T-cell (primary cell): ENCODE measurements at regions of chr16 and their contacts with region 1.

Region 1: DNA sequence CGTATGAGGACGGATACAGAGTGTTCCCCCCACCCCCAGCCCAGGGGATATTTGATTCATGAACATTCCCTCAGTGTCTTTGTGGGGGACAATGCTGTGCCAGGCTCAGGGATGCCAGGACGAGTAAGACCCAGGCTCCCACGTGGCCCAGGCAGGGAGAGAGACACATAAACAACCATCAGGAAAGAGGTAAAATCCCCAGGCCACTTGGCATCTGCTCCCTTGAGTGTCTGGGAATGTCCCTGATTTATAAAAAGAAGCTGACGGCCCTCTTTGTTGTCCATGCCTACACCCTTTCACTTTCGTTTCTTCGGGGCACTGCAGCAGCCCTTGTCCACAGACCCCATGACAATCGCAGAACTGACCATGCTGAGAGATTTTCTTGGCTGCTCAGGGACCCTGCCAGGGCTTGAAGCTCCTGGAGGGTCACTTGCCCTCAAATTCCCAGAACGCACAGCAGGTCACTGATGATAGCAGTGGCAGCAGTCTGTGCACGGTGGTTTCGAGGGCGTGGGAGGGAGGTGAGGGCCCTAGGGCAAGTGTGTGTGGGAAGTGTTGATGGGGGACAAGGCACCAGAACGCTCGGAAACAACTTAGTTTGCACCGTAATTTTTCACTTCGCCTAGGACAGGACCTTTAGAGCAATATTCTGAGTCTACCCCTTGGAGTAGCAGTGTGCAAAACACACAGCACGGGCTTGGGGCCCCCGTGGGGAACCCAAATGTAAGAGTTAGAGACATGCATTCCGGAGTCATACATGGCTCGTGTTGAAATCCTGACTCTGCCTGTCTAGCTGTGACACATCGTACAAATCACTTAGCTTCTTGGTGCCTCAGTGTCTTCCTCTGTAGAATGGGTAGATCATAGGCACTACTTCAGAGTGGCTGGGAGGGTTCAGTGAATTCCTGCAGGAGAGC is 4.7 kb downstream of the NOD2 start:
- DNase-seq: peak in 5 of 35 experiments; percentile 11 to 72 (median 19)
- ATAC-seq: peak; percentile 46 to 60 (median 46)
- H3K4me3 ChIP-seq: peak overlapping the region in 1 of 2 donors; percentile 44
- H3K4me3 Mint-ChIP-seq: peak overlapping the region; percentile 77 to 84 (median 84)
- H3K27ac ChIP-seq: peak overlapping the region; percentile 94
- H3K27ac Mint-ChIP-seq: peak overlapping the region; percentile 95
- H3K4me1 ChIP-seq: peaks cover 7 to 73% of the 10 kb centered on the region in 2 experiments
- H3K4me1 Mint-ChIP-seq: peaks cover 56 to 89% (median 75%) of the 10 kb centered on the region in 3 donors
- H3K27me3 ChIP-seq: peaks cover 0 to 7% of the 10 kb centered on the region in 2 experiments
- H3K27me3 Mint-ChIP-seq: no peaks in the 10 kb centered on the region

Region 2: DNA sequence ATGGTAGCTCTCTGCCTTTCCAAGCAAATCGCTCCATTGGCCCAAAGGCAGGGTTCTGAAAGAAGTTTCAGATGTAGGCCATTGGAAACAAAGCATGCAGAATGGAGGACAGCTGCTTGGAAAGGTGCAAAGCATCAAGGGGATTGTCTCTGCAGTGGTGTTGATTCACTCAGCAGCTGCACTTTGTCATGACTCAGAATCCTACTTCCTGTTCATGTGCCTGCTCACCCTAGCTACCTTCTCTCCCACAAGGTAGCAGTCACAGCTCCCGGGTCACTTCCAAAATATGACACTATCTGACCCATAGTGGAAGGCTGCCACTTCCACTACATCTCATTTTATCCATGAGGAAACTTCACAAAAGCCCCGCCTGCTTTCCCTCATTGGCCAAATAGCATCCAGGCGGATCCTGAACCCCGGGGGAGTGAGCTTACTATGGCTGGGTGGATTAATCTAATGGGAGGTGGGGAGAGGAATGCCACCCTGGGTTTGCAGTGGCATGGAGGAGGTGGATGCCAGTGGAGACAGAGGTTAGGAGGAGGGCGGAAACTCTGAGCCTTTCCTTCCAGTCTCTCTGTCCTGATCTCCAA is 224.7 kb before region 1 on chr16:
- CTCF ChIA-PET with region 1: no interaction called
- POLR2A ChIA-PET with region 1: no interaction called
- DNase-seq: no peak
- ATAC-seq: peak in 3 of 4 experiments; percentile 58 to 80 (median 78)
- H3K4me3 ChIP-seq: no peak overlapping the region
- H3K4me3 Mint-ChIP-seq: no peak overlapping the region
- H3K27ac ChIP-seq: no peak overlapping the region
- H3K27ac Mint-ChIP-seq: no peak overlapping the region
- H3K4me1 ChIP-seq: peaks cover 0 to under 1% of the 10 kb centered on the region in 2 experiments
- H3K4me1 Mint-ChIP-seq: peaks cover 6 to 15% (median 14%) of the 10 kb centered on the region in 3 donors
- H3K27me3 ChIP-seq: peaks cover 0 to 27% of the 10 kb centered on the region in 2 experiments
- H3K27me3 Mint-ChIP-seq: peaks cover 0 to 17% of the 10 kb centered on the region in 2 donors

Region 3: DNA sequence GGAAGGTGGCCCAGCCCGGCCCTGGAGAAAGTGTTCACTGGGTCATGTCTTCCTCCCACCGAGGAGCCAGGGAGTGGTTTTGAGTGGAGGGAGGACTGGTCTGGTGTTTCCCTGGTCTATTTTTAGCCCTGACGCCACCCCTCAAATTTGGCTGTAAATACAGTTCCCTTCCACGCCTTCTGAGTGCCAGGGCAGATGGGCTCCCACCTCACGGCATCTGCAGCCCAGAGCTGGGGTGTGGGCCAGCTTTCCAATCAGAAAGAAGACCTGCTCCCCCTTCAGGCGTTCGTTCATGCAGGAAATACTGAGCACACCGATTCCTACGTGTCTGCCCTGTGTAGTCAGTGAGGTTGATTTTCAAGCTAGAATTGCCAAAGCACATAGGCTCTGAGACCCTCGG is 70.7 kb before region 1 on chr16:
- CTCF ChIA-PET with region 1: no interaction called
- POLR2A ChIA-PET with region 1: no interaction called
- DNase-seq: peak in 31 of 35 experiments; percentile 14 to 68 (median 42)
- ATAC-seq: peak; percentile 63 to 88 (median 76)
- H3K4me3 ChIP-seq: peak overlapping the region; percentile 19 to 20
- H3K4me3 Mint-ChIP-seq: peak overlapping the region; percentile 53 to 76 (median 64)
- H3K27ac ChIP-seq: peak overlapping the region; percentile 32
- H3K27ac Mint-ChIP-seq: peak overlapping the region; percentile 84 to 87
- H3K4me1 ChIP-seq: peaks cover 22 to 42% of the 10 kb centered on the region in 2 experiments
- H3K4me1 Mint-ChIP-seq: peaks cover 46 to 51% (median 47%) of the 10 kb centered on the region in 3 donors
- H3K27me3 ChIP-seq: no peaks in the 10 kb centered on the region
- H3K27me3 Mint-ChIP-seq: no peaks in the 10 kb centered on the region

Region 4: DNA sequence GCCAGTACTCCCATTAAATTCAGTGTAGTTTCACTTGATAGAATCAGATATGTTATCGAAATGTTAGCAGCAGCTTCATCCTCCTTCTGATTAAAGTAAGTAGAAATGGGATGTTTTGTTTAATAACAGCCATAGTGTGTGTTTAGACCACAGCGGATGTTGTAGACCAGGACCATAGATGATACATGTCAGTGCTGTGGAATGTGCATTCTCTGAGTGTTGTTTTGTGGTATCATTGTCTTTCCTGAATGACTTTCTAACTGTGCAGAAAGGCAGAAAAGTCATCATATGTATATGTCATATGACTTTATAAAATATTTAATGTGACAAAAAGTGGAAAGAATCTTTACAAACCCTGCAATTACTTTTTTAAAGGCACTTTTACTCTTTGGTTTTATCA is 99.3 kb after region 1 on chr16:
- CTCF ChIA-PET with region 1: no interaction called
- POLR2A ChIA-PET with region 1: interaction called in 1 of 2 experiments, 11 read pairs
- DNase-seq: no peak
- ATAC-seq: no peak
- H3K4me3 ChIP-seq: no peak overlapping the region
- H3K4me3 Mint-ChIP-seq: no peak overlapping the region
- H3K27ac ChIP-seq: no peak overlapping the region
- H3K27ac Mint-ChIP-seq: peak overlapping the region; percentile 40 to 77
- H3K4me1 ChIP-seq: no peaks in the 10 kb centered on the region
- H3K4me1 Mint-ChIP-seq: peaks cover 7 to 27% (median 15%) of the 10 kb centered on the region in 3 donors
- H3K27me3 ChIP-seq: no peaks in the 10 kb centered on the region
- H3K27me3 Mint-ChIP-seq: no peaks in the 10 kb centered on the region